ENCODE measurements at regions of chr14 and their contacts with region 1.

Region 1: GRCh38 chr14:23320774-23321571 is at the start of gene PABPN1:
- DNase-seq: peak; percentile 98
- ATAC-seq: peak; percentile 97
- total RNA-seq, gene PABPN1: 73.7 TPM

Region 2: DNA sequence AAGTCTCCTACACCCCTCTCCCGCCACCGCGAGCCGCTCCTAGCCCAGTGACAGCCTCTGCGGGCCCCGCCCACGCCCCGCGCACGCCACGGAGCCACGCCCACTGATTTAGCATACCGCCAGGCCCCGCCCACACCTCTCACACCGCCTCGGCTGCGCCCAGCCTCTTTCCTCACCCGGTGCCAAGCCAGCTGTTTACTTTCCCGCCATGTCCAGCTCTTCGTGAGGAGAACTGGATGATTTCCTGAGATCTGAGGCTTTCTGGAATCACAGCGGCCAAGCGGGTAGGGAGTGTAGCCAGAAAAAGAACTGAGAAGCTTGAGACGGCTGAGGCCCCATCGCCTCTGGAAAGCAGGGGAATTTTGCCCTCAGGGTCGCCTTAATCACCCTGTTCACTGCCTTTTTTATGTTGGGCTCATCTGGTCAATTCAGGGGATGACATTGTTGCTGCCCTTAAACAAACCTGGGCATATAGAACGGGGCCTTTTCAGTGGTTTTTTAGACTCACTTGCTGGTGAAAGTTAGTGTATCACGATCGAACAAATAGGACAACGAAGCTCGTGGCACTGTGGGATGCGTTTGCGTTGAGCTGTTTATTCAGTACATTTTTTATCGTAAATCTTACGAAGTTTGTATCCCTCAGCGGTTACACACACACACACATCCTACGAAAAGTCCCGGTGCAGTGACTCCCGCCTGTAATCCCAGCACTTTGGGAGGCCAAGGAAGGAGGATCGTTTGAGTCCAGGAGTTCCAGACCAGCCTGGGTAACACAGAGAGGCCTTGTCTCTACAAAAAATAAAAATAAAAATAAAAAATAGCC is 83.0 kb before region 1 on chr14 and contains the start of gene RNF212B:
- intact Hi-C with region 1: no loop called
- DNase-seq: peak; percentile 96
- ATAC-seq: peak; percentile 100
- total RNA-seq, gene RNF212B: not detected

Region 3: GRCh38 chr14:23301288-23301968 is 19.5 kb before region 1 on chr14:
- intact Hi-C with region 1: loop called (anchors 1 kb)
- DNase-seq: peak; percentile 99
- ATAC-seq: peak; percentile 90

Region 4: GRCh38 chr14:23469127-23469905 is 148.3 kb after region 1 on chr14 and contains the start of gene NGDN:
- intact Hi-C with region 1: loop called (anchors 5 kb)
- DNase-seq: peak; percentile 95
- ATAC-seq: peak; percentile 97
- total RNA-seq, gene NGDN: 19.8 TPM

Region 5: GRCh38 chr14:23528555-23528954 is 207.6 kb after region 1 on chr14:
- intact Hi-C with region 1: no loop called
- DNase-seq: no peak
- ATAC-seq: no peak

Region 6: GRCh38 chr14:23555882-23556699 is 235.1 kb after region 1 on chr14 and contains the start of gene THTPA:
- intact Hi-C with region 1: loop called (anchors 5 kb)
- DNase-seq: peak; percentile 98
- ATAC-seq: peak; percentile 96
- total RNA-seq, gene THTPA: 16.0 TPM

Measured in Right ventricle myocardium inferior (tissue), 1 donor.